ENCODE measurements at regions of chr17 and their contacts with region 1.

Region 1: GRCh38 chr17:21043286-21044232 is 748 bp upstream of the USP22 start:
- H3K4me3 ChIP-seq: peak overlapping the region; percentile 70
- H3K27ac ChIP-seq: peak overlapping the region; percentile 91
- H3K4me1 ChIP-seq: peaks cover 13% of the 10 kb centered on the region
- CTCF ChIP-seq: peak; percentile 98

Region 2: GRCh38 chr17:21058098-21058893 is 14.7 kb after region 1 on chr17:
- CTCF ChIA-PET with region 1: interaction called, 19 read pairs
- POLR2A ChIA-PET with region 1: interaction called, 13 read pairs
- H3K4me3 ChIP-seq: no peak overlapping the region
- H3K27ac ChIP-seq: no peak overlapping the region
- H3K4me1 ChIP-seq: peaks cover 2% of the 10 kb centered on the region; the same call in 1 of the 2 replicates
- CTCF ChIP-seq: no peak

Region 3: GRCh38 chr17:21098934-21099689 is 55.6 kb after region 1 on chr17:
- CTCF ChIA-PET with region 1: interaction called, 17 read pairs
- POLR2A ChIA-PET with region 1: interaction called, 59 read pairs
- H3K4me3 ChIP-seq: peak overlapping the region; percentile 62
- H3K27ac ChIP-seq: peak overlapping the region; percentile 93
- H3K4me1 ChIP-seq: no peaks in the 10 kb centered on the region
- CTCF ChIP-seq: no peak

Region 4: GRCh38 chr17:21126645-21127510 is 83.3 kb after region 1 on chr17 and contains the start of gene DHRS7B:
- CTCF ChIA-PET with region 1: interaction called, 6 read pairs
- POLR2A ChIA-PET with region 1: interaction called, 14 read pairs
- H3K4me3 ChIP-seq: peak within 1 kb of the TSS; percentile 90
- H3K27ac ChIP-seq: peak within 1 kb of the TSS; percentile 80
- H3K4me1 ChIP-seq: peaks cover 2% of the 10 kb centered on the region
- CTCF ChIP-seq: peak; percentile 33; the same call in 1 of the 2 replicates

Measured in HEK293 (cell line).